ENCODE measurements at regions of chr16 and their contacts with region 1.

Region 1: DNA sequence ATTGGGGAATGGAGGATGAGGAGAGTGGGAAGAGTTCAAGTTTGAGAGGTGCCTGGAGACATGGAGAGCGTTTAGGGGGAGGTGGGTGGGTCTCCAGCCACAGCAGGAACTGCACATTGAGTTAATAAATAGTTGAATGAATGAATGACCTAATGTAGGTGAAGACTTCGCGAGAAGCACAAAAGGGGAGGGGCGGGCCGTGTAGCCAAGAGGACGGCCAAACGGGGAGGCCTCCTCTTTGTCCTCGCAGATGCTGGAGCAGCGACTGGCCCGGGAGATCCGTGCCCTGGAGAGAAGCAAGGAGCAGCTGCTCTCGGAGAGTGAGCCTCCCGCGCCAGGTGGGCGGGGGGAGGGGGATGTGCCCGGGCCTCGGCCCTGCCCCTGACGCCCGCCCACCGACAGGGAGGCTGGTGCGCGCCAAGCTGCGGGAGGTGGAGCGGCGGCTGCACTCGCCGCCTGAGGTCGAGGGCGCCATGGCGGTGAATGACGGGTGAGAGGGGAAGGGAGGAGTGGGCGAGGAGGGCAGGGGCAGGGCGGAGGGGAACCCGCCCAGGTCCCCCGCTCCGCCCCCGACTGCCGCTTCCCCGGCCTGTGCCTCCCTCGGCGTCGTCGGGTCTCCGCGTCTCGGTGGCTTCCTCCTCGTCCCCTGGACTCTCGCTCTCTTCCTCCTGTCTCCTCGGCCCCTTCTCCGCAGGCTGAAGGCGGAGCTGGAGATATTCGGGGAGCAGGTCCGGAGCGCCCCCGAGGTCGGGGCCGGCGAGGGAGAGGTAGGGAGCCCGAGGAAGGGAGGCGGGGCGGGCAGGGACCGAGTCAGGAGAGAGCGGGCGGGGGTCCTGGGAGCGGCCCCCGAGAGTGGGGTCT is 12.9 kb downstream of the SYCE1L start:
- DNase-seq: peak; percentile 81
- ATAC-seq: peak; percentile 82
- H3K4me3 Mint-ChIP-seq: peak overlapping the region; percentile 75
- H3K27ac Mint-ChIP-seq: peak overlapping the region; percentile 54
- H3K4me1 Mint-ChIP-seq: peaks cover 13% of the 10 kb centered on the region
- H3K27me3 Mint-ChIP-seq: no peaks in the 10 kb centered on the region
- CTCF ChIP-seq: no peak

Region 2: DNA sequence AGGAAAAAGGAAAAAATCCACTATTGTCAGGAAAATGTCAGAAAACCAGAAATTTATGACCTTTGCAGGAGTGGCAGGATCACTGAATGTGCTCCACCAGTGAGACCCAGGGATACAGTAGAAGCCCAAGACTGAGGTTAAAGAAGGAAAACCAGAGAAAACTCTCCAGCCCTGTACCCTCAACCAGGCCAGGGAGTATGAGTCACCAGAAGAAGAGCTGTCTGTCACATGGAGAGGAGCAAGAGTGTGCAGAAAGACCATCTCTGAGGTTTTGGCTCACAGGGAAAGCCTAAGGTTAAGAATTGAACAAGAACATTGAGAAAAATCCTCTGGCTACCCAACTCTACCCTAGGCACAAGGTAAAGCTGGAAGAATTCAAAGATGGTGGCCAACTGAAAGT is 68.7 kb before region 1 on chr16:
- CTCF ChIA-PET with region 1: no interaction called
- POLR2A ChIA-PET with region 1: no interaction called
- intact Hi-C with region 1: no loop called
- DNase-seq: no peak
- ATAC-seq: no peak
- H3K4me3 Mint-ChIP-seq: no peak overlapping the region
- H3K27ac Mint-ChIP-seq: no peak overlapping the region
- H3K4me1 Mint-ChIP-seq: no peaks in the 10 kb centered on the region
- H3K27me3 Mint-ChIP-seq: peaks cover 12% of the 10 kb centered on the region
- CTCF ChIP-seq: no peak

Region 3: GRCh38 chr16:77157346-77158058 is 54.6 kb before region 1 on chr16:
- CTCF ChIA-PET with region 1: no interaction called
- POLR2A ChIA-PET with region 1: no interaction called
- intact Hi-C with region 1: no loop called
- DNase-seq: no peak
- ATAC-seq: no peak
- H3K4me3 Mint-ChIP-seq: no peak overlapping the region
- H3K27ac Mint-ChIP-seq: no peak overlapping the region
- H3K4me1 Mint-ChIP-seq: no peaks in the 10 kb centered on the region
- H3K27me3 Mint-ChIP-seq: peaks cover 19% of the 10 kb centered on the region
- CTCF ChIP-seq: no peak

Region 4: DNA sequence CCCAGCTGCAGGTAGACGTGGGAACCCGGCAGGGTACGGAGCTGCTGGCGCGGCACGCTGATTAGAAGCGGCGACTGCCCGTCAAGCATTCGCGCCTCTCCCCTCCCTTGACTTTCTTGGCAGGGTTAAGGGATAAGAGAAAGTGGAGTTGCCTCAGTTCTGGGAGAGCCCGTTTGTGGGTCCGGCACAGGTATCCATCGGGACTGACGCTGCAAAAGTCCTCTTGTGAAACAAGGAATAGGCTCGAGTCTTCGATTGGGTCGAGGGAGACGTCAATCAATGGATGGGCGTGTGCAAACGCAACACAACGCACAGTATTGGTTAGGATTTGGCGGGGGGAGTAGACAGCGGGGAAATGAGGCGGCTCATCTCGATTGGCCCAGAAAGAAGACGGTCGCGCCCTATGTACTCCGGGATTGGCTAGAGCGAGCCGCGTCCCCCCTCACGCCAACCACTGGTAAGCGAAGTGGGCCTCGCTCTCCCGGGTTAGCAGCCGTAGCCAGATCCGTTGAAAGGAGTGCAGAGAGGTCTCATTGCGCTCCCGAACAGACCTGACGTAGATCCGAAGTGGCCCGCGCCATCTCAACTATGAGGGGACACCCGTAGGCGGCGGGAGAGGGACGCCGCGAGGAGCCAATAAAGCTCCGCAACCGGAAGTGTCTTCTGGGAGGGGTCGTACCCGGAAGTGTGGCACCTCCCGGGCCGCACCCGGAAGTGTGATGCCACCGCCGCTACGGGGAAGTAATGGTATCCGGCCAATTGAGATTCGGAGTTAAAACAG is 21.4 kb before region 1 on chr16 and contains the start of gene MON1B:
- CTCF ChIA-PET with region 1: no interaction called
- POLR2A ChIA-PET with region 1: interaction called, 4 read pairs
- intact Hi-C with region 1: loop called (anchors 2 kb)
- DNase-seq: peak; percentile 97
- ATAC-seq: peak; percentile 98
- H3K4me3 Mint-ChIP-seq: peak within 1 kb of the TSS; percentile 84
- H3K27ac Mint-ChIP-seq: peak within 1 kb of the TSS; percentile 89
- H3K4me1 Mint-ChIP-seq: peaks cover 38% of the 10 kb centered on the region
- H3K27me3 Mint-ChIP-seq: peaks cover 3% of the 10 kb centered on the region
- CTCF ChIP-seq: no peak
- total RNA-seq, gene MON1B: 54.3 to 60.5 TPM

Region 5: GRCh38 chr16:77722309-77723107 is 510.4 kb after region 1 on chr16 and contains the start of gene NUDT7:
- CTCF ChIA-PET with region 1: no interaction called
- POLR2A ChIA-PET with region 1: no interaction called
- intact Hi-C with region 1: loop called (anchors 10 kb)
- DNase-seq: peak; percentile 99
- ATAC-seq: peak; percentile 99
- H3K4me3 Mint-ChIP-seq: peak within 1 kb of the TSS; percentile 84
- H3K27ac Mint-ChIP-seq: peak within 1 kb of the TSS; percentile 78
- H3K4me1 Mint-ChIP-seq: peaks cover 14% of the 10 kb centered on the region
- H3K27me3 Mint-ChIP-seq: no peaks in the 10 kb centered on the region
- CTCF ChIP-seq: peak; percentile 19
- total RNA-seq, gene NUDT7: 6.4 to 8.0 TPM